Colonic mucosa (tissue), 4 donors: ENCODE measurements at regions of chr12 and their contacts with region 1.

Region 1: GRCh38 chr12:121550974-121551634 is 29.7 kb downstream of the KDM2B start:
- DNase-seq: no peak
- H3K4me3 ChIP-seq: no peak overlapping the region
- H3K27ac ChIP-seq: no peak overlapping the region
- H3K4me1 ChIP-seq: no peaks in the 10 kb centered on the region
- H3K27me3 ChIP-seq: no peaks in the 10 kb centered on the region
- CTCF ChIP-seq: no peak

Region 2: DNA sequence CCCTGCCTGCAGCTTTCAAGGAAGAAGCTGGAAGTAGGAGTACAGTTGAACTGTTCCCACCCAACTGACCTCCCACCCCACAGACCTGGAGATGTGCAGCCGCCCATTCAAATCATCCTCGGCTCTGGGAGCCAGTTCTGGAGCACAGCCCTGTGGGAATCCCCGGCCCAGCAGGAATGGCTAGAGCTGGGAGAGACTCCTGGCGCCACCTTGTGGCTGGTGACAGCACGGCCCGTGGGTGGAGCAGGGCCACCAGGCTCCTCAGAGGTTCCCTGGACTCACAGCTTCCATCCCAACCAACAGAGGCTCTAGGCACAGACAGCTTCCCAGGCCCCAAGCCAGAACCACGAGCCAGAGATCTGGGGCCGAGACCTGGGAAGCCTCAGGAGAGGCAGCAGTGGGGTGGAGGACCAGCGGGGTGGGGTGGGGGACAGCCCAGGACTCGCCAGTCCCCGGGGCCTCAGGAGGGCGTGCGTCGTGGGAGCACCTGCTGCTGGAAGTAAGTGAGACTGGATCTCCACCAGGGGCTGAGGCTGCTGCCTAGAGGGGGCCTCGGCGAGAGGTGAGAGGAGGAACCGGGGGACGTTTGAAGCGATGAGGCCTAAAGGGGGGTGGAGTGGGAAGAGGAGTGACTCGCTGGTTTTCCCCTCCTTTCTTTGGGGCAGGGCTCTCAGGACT is 107.8 kb before region 1 on chr12:
- intact Hi-C with region 1: no loop called
- DNase-seq: peak; percentile 85
- H3K4me3 ChIP-seq: no peak overlapping the region
- H3K27ac ChIP-seq: no peak overlapping the region
- H3K4me1 ChIP-seq: peaks cover 7% of the 10 kb centered on the region
- H3K27me3 ChIP-seq: no peaks in the 10 kb centered on the region
- CTCF ChIP-seq: peak; percentile 82

Region 3: GRCh38 chr12:121590476-121591143 is 39.5 kb after region 1 on chr12:
- intact Hi-C with region 1: no loop called
- DNase-seq: no peak
- H3K4me3 ChIP-seq: no peak overlapping the region
- H3K27ac ChIP-seq: peak overlapping the region; percentile 79
- H3K4me1 ChIP-seq: no peaks in the 10 kb centered on the region
- H3K27me3 ChIP-seq: no peaks in the 10 kb centered on the region
- CTCF ChIP-seq: no peak

Region 4: GRCh38 chr12:121773011-121773777 is 222.1 kb after region 1 on chr12:
- intact Hi-C with region 1: loop called (anchors 10 kb)
- DNase-seq: peak; percentile 76
- H3K4me3 ChIP-seq: no peak overlapping the region
- H3K27ac ChIP-seq: no peak overlapping the region
- H3K4me1 ChIP-seq: peaks cover 4% of the 10 kb centered on the region
- H3K27me3 ChIP-seq: no peaks in the 10 kb centered on the region
- CTCF ChIP-seq: peak; percentile 85

Region 5: DNA sequence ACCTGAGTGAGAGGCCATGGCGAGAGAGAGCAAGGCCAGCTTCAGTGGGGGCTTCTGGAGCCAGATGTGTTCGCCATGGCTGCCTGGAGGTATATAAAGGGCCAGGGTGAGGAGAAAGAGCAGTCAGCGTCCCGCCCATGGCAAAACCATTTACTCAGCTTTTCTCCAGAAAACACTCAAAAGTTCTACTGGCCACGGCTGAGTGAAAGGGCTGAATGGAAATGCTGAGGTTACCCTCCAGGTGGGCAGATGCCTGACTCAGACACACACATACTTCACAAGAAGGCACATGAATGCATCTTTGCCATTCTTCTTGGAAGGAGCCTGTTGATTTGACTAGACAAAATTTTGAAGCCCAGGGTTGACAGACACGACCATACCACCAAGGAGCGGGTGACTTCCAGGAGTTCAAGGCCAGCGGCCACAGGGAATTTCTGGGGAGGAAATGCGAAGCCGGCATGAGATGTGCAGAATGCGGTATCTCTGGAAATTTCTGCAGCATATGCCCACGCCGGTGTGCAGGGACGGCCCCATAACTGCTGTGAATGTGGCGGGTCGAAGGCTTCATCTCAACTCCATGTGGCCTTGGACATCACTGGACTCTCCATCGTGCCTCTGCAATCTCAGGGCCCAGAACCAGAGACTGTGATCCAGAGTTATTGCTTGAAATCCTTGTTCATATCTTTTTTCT is 623.2 kb after region 1 on chr12 and contains the start of gene IL31:
- intact Hi-C with region 1: no loop called
- DNase-seq: no peak
- H3K4me3 ChIP-seq: no peak within 1 kb of the TSS
- H3K27ac ChIP-seq: no peak within 1 kb of the TSS
- H3K4me1 ChIP-seq: no peaks in the 10 kb centered on the region
- H3K27me3 ChIP-seq: no peaks in the 10 kb centered on the region
- CTCF ChIP-seq: no peak
- total RNA-seq, gene IL31: not detected